Activated CD4-positive, alpha-beta T cell treated with anti-CD3 and anti-CD28 coated beads for 36 hours (primary cell): ENCODE measurements at regions of chr6 and their contacts with region 1.

Region 1: GRCh38 chr6:165536911-165537310 is 126.1 kb downstream of the PDE10A start:
- DNase-seq: no peak
- ATAC-seq: no peak
- H3K4me3 Mint-ChIP-seq: no peak overlapping the region
- H3K27ac Mint-ChIP-seq: no peak overlapping the region
- H3K4me1 Mint-ChIP-seq: no peaks in the 10 kb centered on the region
- H3K27me3 Mint-ChIP-seq: no peaks in the 10 kb centered on the region

Region 2: GRCh38 chr6:165573671-165574070 is 36.8 kb after region 1 on chr6:
- CTCF ChIA-PET with region 1: no interaction called
- POLR2A ChIA-PET with region 1: no interaction called
- intact Hi-C with region 1: loop called in 1 of 2 experiments (anchors 1 kb)
- DNase-seq: no peak
- ATAC-seq: no peak
- H3K4me3 Mint-ChIP-seq: no peak overlapping the region
- H3K27ac Mint-ChIP-seq: no peak overlapping the region
- H3K4me1 Mint-ChIP-seq: no peaks in the 10 kb centered on the region
- H3K27me3 Mint-ChIP-seq: no peaks in the 10 kb centered on the region